Adrenal gland (tissue), 19 donors: ENCODE measurements at regions of chr3 and their contacts with region 1.

Region 1: GRCh38 chr3:129824926-129825541 is 68.5 kb downstream of the TMCC1 start:
- DNase-seq: peak in 3 of 7 donors; percentile 25 to 42 (median 35)
- H3K4me3 ChIP-seq: no peak overlapping the region
- H3K27ac ChIP-seq: no peak overlapping the region
- H3K4me1 ChIP-seq: peaks cover 0 to 22% of the 10 kb centered on the region in 2 donors
- H3K27me3 ChIP-seq: no peaks in the 10 kb centered on the region
- CTCF ChIP-seq: peak; percentile 49 to 83 (median 72)
- POLR2A ChIP-seq: no peak

Region 2: GRCh38 chr3:129490242-129491045 is 334.6 kb before region 1 on chr3:
- intact Hi-C with region 1: loop called (anchors 10 kb)
- DNase-seq: peak; percentile 88 to 95 (median 93)
- H3K4me3 ChIP-seq: no peak overlapping the region
- H3K27ac ChIP-seq: peak overlapping the region in 4 of 5 donors; percentile 63 to 91 (median 84)
- H3K4me1 ChIP-seq: peaks cover 28 to 36% of the 10 kb centered on the region in 2 donors
- H3K27me3 ChIP-seq: no peaks in the 10 kb centered on the region
- CTCF ChIP-seq: peak; percentile 76 to 93 (median 90)
- POLR2A ChIP-seq: peak in 1 of 2 donors; percentile 28

Region 3: GRCh38 chr3:129645290-129645689 is 179.7 kb before region 1 on chr3:
- intact Hi-C with region 1: loop called (anchors 5 kb)
- DNase-seq: no peak
- H3K4me3 ChIP-seq: no peak overlapping the region
- H3K27ac ChIP-seq: no peak overlapping the region
- H3K4me1 ChIP-seq: peaks cover 0 to 5% of the 10 kb centered on the region in 2 donors
- H3K27me3 ChIP-seq: no peaks in the 10 kb centered on the region
- CTCF ChIP-seq: no peak
- POLR2A ChIP-seq: no peak

Region 4: GRCh38 chr3:129650256-129650872 is 174.7 kb before region 1 on chr3:
- intact Hi-C with region 1: loop called (anchors 5 kb)
- DNase-seq: peak; percentile 59 to 89 (median 75)
- H3K4me3 ChIP-seq: no peak overlapping the region
- H3K27ac ChIP-seq: no peak overlapping the region
- H3K4me1 ChIP-seq: peaks cover 0 to 24% of the 10 kb centered on the region in 2 donors
- H3K27me3 ChIP-seq: no peaks in the 10 kb centered on the region
- CTCF ChIP-seq: peak; percentile 52 to 89 (median 76)
- POLR2A ChIP-seq: no peak

Region 5: GRCh38 chr3:129893581-129894070 is 68.6 kb after region 1 on chr3 and contains the start of gene TMCC1:
- intact Hi-C with region 1: loop called in 1 of 2 experiments (anchors 10 kb)
- DNase-seq: peak; percentile 76 to 87 (median 84)
- H3K4me3 ChIP-seq: peak within 1 kb of the TSS; percentile 21 to 91 (median 81)
- H3K27ac ChIP-seq: peak within 1 kb of the TSS; percentile 88 to 95 (median 93)
- H3K4me1 ChIP-seq: peaks cover 35 to 47% of the 10 kb centered on the region in 2 donors
- H3K27me3 ChIP-seq: no peaks in the 10 kb centered on the region
- CTCF ChIP-seq: no peak
- POLR2A ChIP-seq: no peak
- total RNA-seq, gene TMCC1: 21.6 to 141 (median 24.3) TPM

Region 6: GRCh38 chr3:129934234-129935123 is 109.4 kb after region 1 on chr3:
- intact Hi-C with region 1: loop called in 1 of 2 experiments (anchors 5 kb)
- DNase-seq: peak in 6 of 7 donors; percentile 13 to 61 (median 30)
- H3K4me3 ChIP-seq: peak overlapping the region in 1 of 4 donors; percentile 41
- H3K27ac ChIP-seq: no peak overlapping the region
- H3K4me1 ChIP-seq: peaks cover 0 to 4% of the 10 kb centered on the region in 2 donors
- H3K27me3 ChIP-seq: no peaks in the 10 kb centered on the region
- CTCF ChIP-seq: peak; percentile 84 to 95 (median 87)
- POLR2A ChIP-seq: no peak

Region 7: GRCh38 chr3:130640027-130640426 is 815.0 kb after region 1 on chr3:
- intact Hi-C with region 1: no loop called
- DNase-seq: no peak
- H3K4me3 ChIP-seq: no peak overlapping the region
- H3K27ac ChIP-seq: no peak overlapping the region
- H3K4me1 ChIP-seq: peaks cover 0 to 4% of the 10 kb centered on the region in 2 donors
- H3K27me3 ChIP-seq: peaks cover 4% of the 10 kb centered on the region
- CTCF ChIP-seq: no peak
- POLR2A ChIP-seq: no peak